ENCODE measurements at regions of chr10 and their contacts with region 1.

Region 1: DNA sequence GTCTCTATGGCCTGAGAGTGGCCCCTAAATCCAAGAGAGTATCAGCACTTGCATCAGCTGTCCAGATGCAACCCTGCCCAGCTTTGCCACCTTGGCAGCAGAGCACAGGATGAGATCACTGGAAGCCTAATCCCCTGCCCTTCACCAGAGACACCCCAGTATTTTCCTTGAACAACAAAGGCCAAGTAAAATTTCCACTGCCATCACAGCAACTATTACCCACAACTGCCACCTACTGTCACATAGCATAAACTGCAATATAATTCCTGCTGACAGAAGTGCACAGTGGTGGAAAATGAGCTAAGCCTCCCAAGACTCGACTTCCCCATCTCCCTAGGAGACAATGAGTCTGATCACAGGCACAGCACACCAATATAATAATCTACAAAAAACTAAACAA is 462.8 kb upstream of the ZWINT start:
- DNase-seq: peak; percentile 0
- H3K4me3 ChIP-seq: no peak overlapping the region
- H3K27ac ChIP-seq: no peak overlapping the region
- H3K4me1 ChIP-seq: no peaks in the 10 kb centered on the region
- H3K27me3 ChIP-seq: no peaks in the 10 kb centered on the region
- CTCF ChIP-seq: peak; percentile 49 to 69

Region 2: GRCh38 chr10:56360967-56361612 is 462.8 kb before region 1 on chr10 and contains the start of gene ZWINT:
- CTCF ChIA-PET with region 1: no interaction called
- dilution Hi-C with region 1: no loop called
- in situ Hi-C with region 1: no loop called
- intact Hi-C with region 1: loop called (anchors 5 kb)
- DNase-seq: peak; percentile 95
- H3K4me3 ChIP-seq: peak within 1 kb of the TSS; percentile 80 to 86 (median 85)
- H3K27ac ChIP-seq: peak within 1 kb of the TSS; percentile 65
- H3K4me1 ChIP-seq: peaks cover 11% of the 10 kb centered on the region
- H3K27me3 ChIP-seq: no peaks in the 10 kb centered on the region
- CTCF ChIP-seq: no peak
- total RNA-seq, gene ZWINT: 6.7 to 42.0 TPM

Region 3: DNA sequence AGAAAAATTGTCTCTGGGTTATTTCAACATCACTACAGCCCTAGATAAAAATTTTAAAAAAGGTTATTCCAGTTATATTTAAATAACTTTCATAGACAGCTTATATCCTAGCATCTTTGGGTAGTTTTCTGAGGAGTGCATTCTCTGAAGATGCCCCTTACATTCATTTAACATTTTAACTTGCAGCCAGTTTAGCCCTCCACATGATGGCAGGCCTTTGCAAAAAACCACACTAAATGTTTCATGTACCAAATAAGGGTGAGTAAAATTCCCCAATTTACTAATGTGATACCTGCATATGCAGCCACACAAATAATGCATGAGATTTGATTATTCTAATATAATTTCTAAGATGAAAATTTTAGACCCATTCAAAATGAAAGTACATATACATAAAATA is 354.4 kb before region 1 on chr10:
- CTCF ChIA-PET with region 1: no interaction called
- dilution Hi-C with region 1: no loop called
- in situ Hi-C with region 1: no loop called
- intact Hi-C with region 1: loop called (anchors 5 kb)
- DNase-seq: no peak
- H3K4me3 ChIP-seq: no peak overlapping the region
- H3K27ac ChIP-seq: no peak overlapping the region
- H3K4me1 ChIP-seq: no peaks in the 10 kb centered on the region
- H3K27me3 ChIP-seq: no peaks in the 10 kb centered on the region
- CTCF ChIP-seq: peak in 1 of 2 donors; percentile 43

Measured in mammary epithelial cell (primary cell).